GM10248 (cell line): ENCODE measurements at regions of chr3 and their contacts with region 1.

Region 1: GRCh38 chr3:156509189-156510174 is 45.4 kb downstream of the SSR3 start:
- DNase-seq: peak; percentile 69
- CTCF ChIP-seq: peak; percentile 51

Region 2: GRCh38 chr3:156449712-156450574 is 59.5 kb before region 1 on chr3:
- CTCF ChIA-PET with region 1: interaction called, 35 read pairs
- POLR2A ChIA-PET with region 1: no interaction called
- DNase-seq: peak; percentile 40
- CTCF ChIP-seq: peak; percentile 56

Region 3: DNA sequence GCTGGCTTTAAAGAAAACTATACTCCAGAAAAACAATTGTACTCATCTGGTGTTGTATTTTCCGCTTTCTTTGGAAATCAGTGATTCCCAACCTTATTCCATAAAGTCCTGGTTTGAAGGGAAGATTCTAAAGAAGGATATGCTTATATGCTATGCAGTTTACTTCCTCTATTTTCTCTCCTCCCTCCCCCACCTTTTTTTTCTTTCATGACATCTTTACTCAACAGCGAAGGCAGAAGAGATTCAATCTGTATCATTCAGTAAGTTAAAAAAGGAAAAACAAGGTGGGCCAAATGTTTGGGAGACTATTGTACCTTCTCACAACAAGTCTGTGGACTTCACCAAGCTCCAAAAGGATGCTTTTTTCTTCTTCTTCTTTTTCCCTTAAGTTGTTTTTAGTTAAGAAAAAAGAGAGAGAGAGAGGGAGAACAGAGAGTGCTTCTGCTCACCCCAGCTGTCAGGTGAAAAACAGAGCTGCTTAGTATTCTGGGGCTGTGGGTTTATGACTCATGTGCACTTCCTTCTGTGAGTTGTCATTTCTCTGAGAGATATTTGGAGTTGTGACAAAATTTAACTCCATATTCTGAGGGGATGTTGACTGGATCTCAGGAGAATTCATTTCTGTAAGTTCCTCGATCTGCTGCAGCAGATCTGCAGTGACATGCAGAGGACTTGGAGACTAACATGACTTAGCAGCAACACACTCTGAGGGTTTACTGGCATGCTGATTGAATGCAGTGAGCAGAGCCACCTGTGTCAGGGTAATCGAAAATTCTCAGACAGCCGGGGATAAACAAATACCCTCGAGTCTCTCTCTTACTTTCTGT is 25.3 kb before region 1 on chr3:
- CTCF ChIA-PET with region 1: interaction called, 60 read pairs
- POLR2A ChIA-PET with region 1: no interaction called
- DNase-seq: peak; percentile 33
- CTCF ChIP-seq: no peak

Region 4: DNA sequence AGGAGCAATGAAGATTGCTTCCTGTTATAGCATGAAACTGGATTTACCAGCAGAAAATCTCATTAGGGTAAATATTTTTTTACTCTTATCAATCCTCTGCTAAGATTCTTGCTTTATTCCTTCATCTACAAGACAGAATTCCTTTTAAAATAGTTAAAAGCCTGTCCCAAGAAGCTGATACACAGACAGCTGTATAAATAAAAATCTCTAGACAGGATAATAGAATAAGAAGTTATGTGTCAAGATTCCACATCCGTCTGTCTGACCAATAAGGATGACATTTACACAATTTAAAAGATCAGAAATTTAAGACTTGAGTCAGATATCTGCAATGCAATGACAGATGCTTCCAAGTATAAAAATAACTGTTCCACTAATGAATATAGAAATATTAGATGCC is 12.2 kb before region 1 on chr3:
- CTCF ChIA-PET with region 1: interaction called, 56 read pairs
- POLR2A ChIA-PET with region 1: no interaction called
- DNase-seq: no peak
- CTCF ChIP-seq: no peak